Left colon (tissue), 2 donors: ENCODE measurements at regions of chr10 and their contacts with region 1.

Region 1: GRCh38 chr10:5629303-5630111 is 36.9 kb downstream of the ASB13 start:
- DNase-seq: peak; percentile 75 to 90
- ATAC-seq: peak; percentile 59

Region 2: GRCh38 chr10:5293691-5294550 is 335.6 kb before region 1 on chr10:
- intact Hi-C with region 1: no loop called
- DNase-seq: peak; percentile 71 to 82
- ATAC-seq: peak; percentile 63

Region 3: DNA sequence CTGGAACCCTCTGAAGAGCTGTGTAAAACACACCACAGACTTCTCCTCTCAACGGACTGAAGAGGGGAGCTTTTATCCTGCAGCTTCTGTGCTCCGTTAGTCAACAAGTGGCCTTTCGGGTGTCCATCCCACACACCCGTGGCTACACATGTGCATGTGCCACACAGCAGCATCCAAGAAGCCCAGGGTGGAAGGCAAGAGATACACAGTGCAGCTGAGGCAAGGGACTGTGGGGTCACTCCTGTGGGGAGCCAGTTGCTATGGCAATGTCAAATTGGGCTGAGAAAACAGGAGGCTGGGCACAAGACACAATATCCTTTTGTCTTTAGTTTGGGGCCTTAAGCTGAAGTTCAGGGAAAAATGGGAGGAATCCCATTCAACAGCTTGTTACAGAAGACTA is 188.4 kb before region 1 on chr10:
- intact Hi-C with region 1: loop called (anchors 2 to 5 kb)
- DNase-seq: no peak
- ATAC-seq: no peak

Region 4: DNA sequence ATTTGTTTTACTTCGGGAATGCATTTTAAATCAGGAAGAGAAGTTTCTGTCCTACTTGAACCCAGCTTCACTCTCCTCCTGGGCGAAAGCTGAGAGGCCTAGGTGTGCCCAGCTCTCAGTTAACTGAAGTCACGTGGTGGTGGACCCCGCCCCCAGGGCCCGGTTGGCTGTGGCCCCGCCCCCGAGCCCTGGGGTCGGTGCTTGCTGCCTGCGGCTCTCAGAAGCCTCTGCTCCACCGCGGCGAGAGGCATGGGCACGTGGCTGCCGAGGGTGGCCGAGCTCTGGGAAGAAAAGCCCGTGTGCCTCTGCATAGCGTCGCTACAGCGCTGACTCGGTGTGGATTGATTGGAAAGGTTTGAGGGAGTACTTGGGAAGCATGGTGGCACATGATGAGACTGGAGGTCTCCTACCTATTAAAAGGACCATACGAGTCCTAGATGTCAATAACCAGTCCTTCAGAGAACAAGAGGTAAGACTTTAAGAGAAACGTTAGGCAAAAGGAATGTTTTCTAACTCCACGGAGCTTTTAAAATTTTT is 183.0 kb before region 1 on chr10:
- intact Hi-C with region 1: loop called (anchors 2 to 5 kb)
- DNase-seq: peak; percentile 95 to 98
- ATAC-seq: peak; percentile 72

Region 5: GRCh38 chr10:5575482-5576166 is 53.9 kb before region 1 on chr10:
- intact Hi-C with region 1: no loop called
- DNase-seq: no peak
- ATAC-seq: no peak